ENCODE measurements at regions of chr3 and their contacts with region 1.

Region 1: DNA sequence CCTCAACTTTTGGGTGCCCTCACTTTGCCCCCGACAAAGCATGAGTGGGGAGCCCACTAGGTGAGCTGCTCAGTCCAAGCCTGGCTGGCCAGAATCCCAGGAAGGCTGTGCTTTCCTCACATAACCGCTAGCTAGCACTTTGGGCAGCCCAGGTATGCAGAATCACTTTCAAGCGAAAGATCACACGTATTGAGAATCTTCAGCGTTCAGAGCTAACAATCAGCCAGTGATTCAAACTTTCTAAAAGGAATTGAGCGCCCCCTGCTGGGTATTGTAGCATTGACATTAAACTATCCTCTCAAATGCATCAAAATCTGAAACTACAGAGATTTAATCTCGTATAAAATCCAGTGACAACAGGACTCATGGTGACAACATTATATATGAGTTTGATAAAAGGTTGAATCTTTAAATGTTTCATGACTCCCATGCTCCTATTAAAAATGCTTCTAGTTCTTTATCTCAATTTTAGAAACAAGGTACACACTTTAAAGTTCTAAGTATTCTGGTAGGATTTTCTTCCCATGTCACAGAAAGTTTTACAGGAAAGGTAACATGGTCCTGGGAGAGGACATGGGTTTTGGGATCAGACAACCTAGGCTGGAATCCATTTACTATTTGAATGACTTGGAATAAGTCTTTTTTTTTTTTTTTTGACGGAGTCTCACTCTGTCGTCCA is 11.8 kb downstream of the ANAPC13 start:
- DNase-seq: peak; percentile 50 to 81 (median 74)
- ATAC-seq: peak; percentile 89
- H3K4me3 ChIP-seq: no peak overlapping the region
- H3K4me3 Mint-ChIP-seq: no peak overlapping the region
- H3K27ac ChIP-seq: no peak overlapping the region
- H3K27ac Mint-ChIP-seq: peak overlapping the region in 1 of 9 donors; percentile 32
- H3K4me1 ChIP-seq: no peaks in the 10 kb centered on the region
- H3K4me1 Mint-ChIP-seq: peaks cover 0 to 9% (median 0%) of the 10 kb centered on the region in 7 donors
- H3K27me3 ChIP-seq: no peaks in the 10 kb centered on the region
- H3K27me3 Mint-ChIP-seq: no peaks in the 10 kb centered on the region

Region 2: GRCh38 chr3:133821767-133822638 is 652.0 kb before region 1 on chr3:
- CTCF ChIA-PET with region 1: no interaction called
- POLR2A ChIA-PET with region 1: no interaction called
- intact Hi-C with region 1: loop called in 1 of 2 experiments (anchors 2 kb)
- DNase-seq: no peak
- ATAC-seq: no peak
- H3K4me3 ChIP-seq: no peak overlapping the region
- H3K4me3 Mint-ChIP-seq: no peak overlapping the region
- H3K27ac ChIP-seq: no peak overlapping the region
- H3K27ac Mint-ChIP-seq: peak overlapping the region in 2 of 9 donors; percentile 10 to 23
- H3K4me1 ChIP-seq: no peaks in the 10 kb centered on the region
- H3K4me1 Mint-ChIP-seq: peaks cover 0 to 6% (median 3%) of the 10 kb centered on the region in 7 donors
- H3K27me3 ChIP-seq: no peaks in the 10 kb centered on the region
- H3K27me3 Mint-ChIP-seq: no peaks in the 10 kb centered on the region

Region 3: GRCh38 chr3:134197681-134198261 is 276.2 kb before region 1 on chr3:
- CTCF ChIA-PET with region 1: interaction called, 5 read pairs
- POLR2A ChIA-PET with region 1: no interaction called
- intact Hi-C with region 1: loop called (anchors 1 kb)
- DNase-seq: peak in 7 of 9 donors; percentile 24 to 55 (median 42)
- ATAC-seq: peak; percentile 83
- H3K4me3 ChIP-seq: no peak overlapping the region
- H3K4me3 Mint-ChIP-seq: no peak overlapping the region
- H3K27ac ChIP-seq: no peak overlapping the region
- H3K27ac Mint-ChIP-seq: no peak overlapping the region
- H3K4me1 ChIP-seq: no peaks in the 10 kb centered on the region
- H3K4me1 Mint-ChIP-seq: peaks cover 0 to 2% (median 0%) of the 10 kb centered on the region in 7 donors
- H3K27me3 ChIP-seq: no peaks in the 10 kb centered on the region
- H3K27me3 Mint-ChIP-seq: no peaks in the 10 kb centered on the region

Region 4: GRCh38 chr3:134239538-134239937 is 234.5 kb before region 1 on chr3:
- CTCF ChIA-PET with region 1: no interaction called
- POLR2A ChIA-PET with region 1: no interaction called
- intact Hi-C with region 1: no loop called
- DNase-seq: no peak
- ATAC-seq: peak; percentile 22
- H3K4me3 ChIP-seq: no peak overlapping the region
- H3K4me3 Mint-ChIP-seq: peak overlapping the region in 2 of 10 donors; percentile 3 to 43
- H3K27ac ChIP-seq: no peak overlapping the region
- H3K27ac Mint-ChIP-seq: peak overlapping the region in 2 of 9 donors; percentile 32 to 55
- H3K4me1 ChIP-seq: peaks cover 9 to 20% of the 10 kb centered on the region in 2 donors
- H3K4me1 Mint-ChIP-seq: peaks cover 19 to 95% (median 88%) of the 10 kb centered on the region in 7 donors
- H3K27me3 ChIP-seq: no peaks in the 10 kb centered on the region
- H3K27me3 Mint-ChIP-seq: peaks cover 0 to 26% (median 0%) of the 10 kb centered on the region in 5 donors

Region 5: GRCh38 chr3:134357261-134358184 is 116.5 kb before region 1 on chr3:
- CTCF ChIA-PET with region 1: interaction called, 3 read pairs
- POLR2A ChIA-PET with region 1: no interaction called
- intact Hi-C with region 1: loop called in 1 of 2 experiments (anchors 1 kb)
- DNase-seq: no peak
- ATAC-seq: no peak
- H3K4me3 ChIP-seq: no peak overlapping the region
- H3K4me3 Mint-ChIP-seq: no peak overlapping the region
- H3K27ac ChIP-seq: no peak overlapping the region
- H3K27ac Mint-ChIP-seq: no peak overlapping the region
- H3K4me1 ChIP-seq: no peaks in the 10 kb centered on the region
- H3K4me1 Mint-ChIP-seq: no peaks in the 10 kb centered on the region
- H3K27me3 ChIP-seq: no peaks in the 10 kb centered on the region
- H3K27me3 Mint-ChIP-seq: no peaks in the 10 kb centered on the region

Region 6: DNA sequence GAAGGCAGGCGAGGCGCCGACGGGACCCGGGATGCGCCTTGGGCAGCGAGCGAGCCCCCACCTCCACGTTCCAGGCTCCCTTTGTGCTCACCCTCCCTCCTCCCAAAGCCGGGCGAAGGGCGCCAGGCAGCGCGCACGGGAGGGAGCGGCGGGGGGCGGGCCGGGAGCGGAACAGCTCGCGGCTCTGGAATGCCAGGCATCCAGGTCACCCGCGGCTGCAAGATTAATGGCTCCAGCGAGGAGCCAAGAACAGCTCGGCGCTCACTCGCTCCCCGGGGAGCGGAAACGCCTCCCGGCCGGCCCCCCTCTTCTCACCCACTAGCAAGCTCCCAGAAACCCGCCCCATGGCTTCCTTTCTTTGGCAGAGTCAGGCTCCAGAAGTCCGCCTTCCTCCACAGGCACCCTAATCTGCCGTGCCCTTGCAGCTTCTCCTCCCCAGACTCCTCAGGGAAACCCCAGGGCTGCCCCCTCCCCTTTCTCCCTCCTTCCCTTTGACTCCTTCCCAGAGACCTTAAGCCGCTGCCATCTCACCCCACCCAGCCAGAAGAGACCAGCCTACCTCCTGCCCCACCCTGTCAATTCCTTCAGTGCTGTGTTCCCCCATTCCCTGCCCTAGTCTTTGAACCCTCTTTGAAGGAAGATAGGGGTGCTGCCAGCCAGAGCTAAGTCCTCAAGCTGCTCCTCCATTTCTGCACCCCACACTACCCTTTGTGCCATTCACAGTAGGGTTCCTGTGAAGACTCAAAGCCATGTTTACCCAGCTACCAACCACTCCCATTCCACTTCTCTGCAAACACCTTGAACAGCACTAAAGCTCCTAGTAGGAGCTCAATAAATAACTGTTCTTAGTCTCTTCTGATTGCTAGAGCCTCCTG is 109.7 kb before region 1 on chr3:
- CTCF ChIA-PET with region 1: interaction called, 3 read pairs
- POLR2A ChIA-PET with region 1: no interaction called
- intact Hi-C with region 1: loop called in 1 of 2 experiments (anchors 2 kb)
- DNase-seq: peak in 3 of 9 donors; percentile 13 to 26 (median 16)
- ATAC-seq: no peak
- H3K4me3 ChIP-seq: peak overlapping the region; percentile 55
- H3K4me3 Mint-ChIP-seq: peak overlapping the region; percentile 52 to 91 (median 83)
- H3K27ac ChIP-seq: no peak overlapping the region
- H3K27ac Mint-ChIP-seq: peak overlapping the region in 7 of 9 donors; percentile 4 to 84 (median 29)
- H3K4me1 ChIP-seq: peaks cover 19 to 21% of the 10 kb centered on the region in 2 donors
- H3K4me1 Mint-ChIP-seq: peaks cover 13 to 33% (median 27%) of the 10 kb centered on the region in 7 donors
- H3K27me3 ChIP-seq: no peaks in the 10 kb centered on the region
- H3K27me3 Mint-ChIP-seq: peaks cover 0 to 28% (median 0%) of the 10 kb centered on the region in 5 donors

Region 7: GRCh38 chr3:134373994-134374790 is 99.8 kb before region 1 on chr3 and contains the start of gene AMOTL2:
- CTCF ChIA-PET with region 1: no interaction called
- POLR2A ChIA-PET with region 1: no interaction called
- intact Hi-C with region 1: loop called in 1 of 2 experiments (anchors 10 kb)
- DNase-seq: peak in 1 of 9 donors; percentile 23
- ATAC-seq: peak; percentile 39
- H3K4me3 ChIP-seq: peak within 1 kb of the TSS; percentile 41
- H3K4me3 Mint-ChIP-seq: peak within 1 kb of the TSS; percentile 78 to 90 (median 84)
- H3K27ac ChIP-seq: no peak within 1 kb of the TSS
- H3K27ac Mint-ChIP-seq: no peak within 1 kb of the TSS
- H3K4me1 ChIP-seq: no peaks in the 10 kb centered on the region
- H3K4me1 Mint-ChIP-seq: peaks cover 7 to 13% (median 11%) of the 10 kb centered on the region in 7 donors
- H3K27me3 ChIP-seq: peaks cover 0 to 3% of the 10 kb centered on the region in 2 donors
- H3K27me3 Mint-ChIP-seq: peaks cover 22 to 63% (median 37%) of the 10 kb centered on the region in 5 donors
- total RNA-seq, gene AMOTL2: not detected